Left ventricle myocardium inferior (tissue), 1 donor: ENCODE measurements at regions of chr9 and their contacts with region 1.

Region 1: DNA sequence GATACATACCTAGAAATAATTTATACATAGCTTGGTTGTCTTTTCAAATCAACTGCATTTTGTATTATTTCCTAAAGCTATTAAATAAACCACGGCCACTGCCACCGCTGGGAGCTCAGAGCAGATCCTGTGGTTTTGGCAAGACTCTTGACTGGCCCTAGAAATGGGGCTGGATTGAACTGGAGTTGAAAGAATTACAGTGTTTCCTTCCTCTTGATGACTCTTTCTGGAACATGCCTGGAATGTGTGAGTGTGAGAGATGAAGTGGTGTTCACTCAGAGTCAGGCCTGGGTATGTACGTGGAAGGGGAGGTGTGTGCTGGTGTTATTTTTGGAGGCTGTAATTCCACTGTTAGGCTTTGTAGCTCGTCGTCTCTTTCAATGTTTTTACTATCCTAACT is 45.9 kb downstream of the TEK start:
- DNase-seq: no peak
- H3K4me3 ChIP-seq: no peak overlapping the region
- H3K27ac ChIP-seq: no peak overlapping the region
- H3K4me1 ChIP-seq: peaks cover 33% of the 10 kb centered on the region
- H3K27me3 ChIP-seq: no peaks in the 10 kb centered on the region
- CTCF ChIP-seq: no peak

Region 2: DNA sequence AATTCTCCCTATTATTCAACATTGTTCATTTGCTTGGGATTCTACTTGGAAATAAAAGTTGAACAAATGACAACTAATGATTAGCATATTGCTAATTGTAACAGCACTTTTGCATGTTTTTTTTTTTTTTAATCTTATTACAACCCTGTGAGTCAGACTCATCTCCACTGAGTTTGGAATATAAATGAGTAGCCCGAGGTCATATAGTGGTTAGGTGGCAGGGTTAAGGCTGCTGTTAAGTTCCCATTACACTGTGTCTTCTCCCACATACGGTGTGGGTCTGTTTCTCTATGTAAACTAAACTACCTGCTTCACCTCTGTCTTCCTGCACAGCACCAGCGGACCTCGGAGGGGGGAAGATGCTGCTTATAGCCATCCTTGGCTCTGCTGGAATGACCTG is 49.7 kb after region 1 on chr9:
- intact Hi-C with region 1: loop called (anchors 5 kb)
- DNase-seq: no peak
- H3K4me3 ChIP-seq: no peak overlapping the region
- H3K27ac ChIP-seq: no peak overlapping the region
- H3K4me1 ChIP-seq: peaks cover 7% of the 10 kb centered on the region
- H3K27me3 ChIP-seq: no peaks in the 10 kb centered on the region
- CTCF ChIP-seq: no peak